ENCODE measurements at regions of chr10 and their contacts with region 1.

Region 1: DNA sequence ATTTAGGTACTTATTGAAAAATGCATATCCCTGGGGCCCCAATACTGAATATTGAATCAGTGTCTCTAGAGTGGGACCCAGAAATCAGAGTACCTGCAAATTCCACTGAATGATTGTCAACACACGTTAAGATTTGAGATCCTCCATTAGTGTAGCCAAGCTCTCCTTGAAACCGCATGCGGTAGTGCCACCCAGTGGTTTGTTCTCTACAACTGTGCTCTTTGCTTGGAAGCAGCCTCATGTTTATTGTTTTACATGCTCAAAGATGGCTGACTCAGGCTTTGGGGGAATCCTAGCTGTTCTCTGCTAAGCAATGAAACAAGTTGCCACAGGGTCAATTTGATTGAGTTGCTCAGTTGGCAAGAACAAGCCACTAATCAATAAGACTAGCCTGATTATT is 340.2 kb upstream of the CELF2 start:
- DNase-seq: peak; percentile 70 to 83
- ATAC-seq: peak; percentile 67
- H3K4me3 ChIP-seq: no peak overlapping the region
- H3K27ac ChIP-seq: no peak overlapping the region
- H3K4me1 ChIP-seq: no peaks in the 10 kb centered on the region
- H3K27me3 ChIP-seq: no peaks in the 10 kb centered on the region

Region 2: GRCh38 chr10:9957351-9957750 is 720.1 kb before region 1 on chr10:
- intact Hi-C with region 1: no loop called
- DNase-seq: no peak
- ATAC-seq: no peak
- H3K4me3 ChIP-seq: no peak overlapping the region
- H3K27ac ChIP-seq: no peak overlapping the region
- H3K4me1 ChIP-seq: no peaks in the 10 kb centered on the region
- H3K27me3 ChIP-seq: no peaks in the 10 kb centered on the region

Region 3: GRCh38 chr10:10233229-10233628 is 444.2 kb before region 1 on chr10:
- intact Hi-C with region 1: loop called (anchors 5 to 10 kb)
- DNase-seq: no peak
- ATAC-seq: no peak
- H3K4me3 ChIP-seq: no peak overlapping the region
- H3K27ac ChIP-seq: no peak overlapping the region
- H3K4me1 ChIP-seq: no peaks in the 10 kb centered on the region
- H3K27me3 ChIP-seq: no peaks in the 10 kb centered on the region

Region 4: GRCh38 chr10:11830836-11831519 is 1153.5 kb after region 1 on chr10:
- intact Hi-C with region 1: no loop called
- DNase-seq: no peak
- ATAC-seq: no peak
- H3K4me3 ChIP-seq: no peak overlapping the region
- H3K27ac ChIP-seq: no peak overlapping the region
- H3K4me1 ChIP-seq: no peaks in the 10 kb centered on the region
- H3K27me3 ChIP-seq: no peaks in the 10 kb centered on the region